ENCODE measurements at regions of chr17 and their contacts with region 1.

Region 1: GRCh38 chr17:32936894-32937500 is 9.0 kb downstream of the TMEM98 start:
- DNase-seq: no peak
- ATAC-seq: peak; percentile 97
- H3K4me3 ChIP-seq: no peak overlapping the region
- H3K27ac ChIP-seq: no peak overlapping the region
- H3K4me1 ChIP-seq: no peaks in the 10 kb centered on the region
- H3K27me3 ChIP-seq: no peaks in the 10 kb centered on the region; a peak in 1 of 4 replicates
- CTCF ChIP-seq: peak; percentile 84 to 89 (median 86)
- EP300 ChIP-seq: no peak
- POLR2A ChIP-seq: no peak
- RAD21 ChIP-seq: peak; percentile 68

Region 2: GRCh38 chr17:32777436-32777835 is 159.6 kb before region 1 on chr17:
- CTCF ChIA-PET with region 1: interaction called, 66 read pairs
- POLR2A ChIA-PET with region 1: no interaction called
- RAD21 ChIA-PET with region 1: interaction called, 37 read pairs
- SMC1A ChIA-PET with region 1: interaction called, 62 read pairs
- in situ Hi-C with region 1: loop called (anchors 5 kb)
- intact Hi-C with region 1: no loop called
- DNase-seq: no peak
- ATAC-seq: no peak
- H3K4me3 ChIP-seq: no peak overlapping the region
- H3K27ac ChIP-seq: no peak overlapping the region
- H3K4me1 ChIP-seq: no peaks in the 10 kb centered on the region
- H3K27me3 ChIP-seq: no peaks in the 10 kb centered on the region
- CTCF ChIP-seq: no peak
- EP300 ChIP-seq: no peak
- POLR2A ChIP-seq: no peak
- RAD21 ChIP-seq: no peak

Region 3: DNA sequence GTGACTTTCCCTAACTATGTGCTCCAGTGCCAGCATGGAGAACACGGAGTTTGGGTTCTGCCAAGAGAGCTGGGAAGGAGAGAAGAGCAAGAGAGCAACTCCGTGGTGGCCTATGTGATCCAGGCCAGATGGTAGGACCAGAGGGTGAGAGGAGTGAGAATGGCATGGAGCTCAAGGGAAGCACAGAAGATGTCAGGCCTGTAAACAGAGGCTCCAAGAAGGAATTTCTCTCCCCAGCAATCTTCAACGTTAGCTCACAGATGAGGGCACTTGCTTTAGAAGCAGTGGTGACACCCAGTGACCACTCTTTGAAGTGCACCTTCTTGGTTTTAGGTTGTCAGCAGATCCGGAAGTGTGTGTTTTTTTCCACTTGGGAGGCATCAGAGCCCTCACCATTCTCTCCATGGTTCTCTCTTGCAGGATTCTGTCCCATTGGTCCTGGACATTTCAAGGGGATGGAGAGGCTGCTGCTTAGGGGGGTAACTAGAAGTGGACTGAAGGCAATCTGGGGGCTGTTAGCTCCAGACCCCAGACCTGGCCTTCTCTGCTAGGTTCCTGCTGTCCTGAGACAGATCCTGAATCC is 27.1 kb before region 1 on chr17:
- CTCF ChIA-PET with region 1: interaction called, 40 read pairs
- POLR2A ChIA-PET with region 1: no interaction called
- RAD21 ChIA-PET with region 1: interaction called, 9 read pairs
- SMC1A ChIA-PET with region 1: interaction called, 9 read pairs
- in situ Hi-C with region 1: no loop called
- intact Hi-C with region 1: no loop called
- DNase-seq: peak; percentile 46
- ATAC-seq: peak; percentile 97
- H3K4me3 ChIP-seq: no peak overlapping the region
- H3K27ac ChIP-seq: no peak overlapping the region
- H3K4me1 ChIP-seq: no peaks in the 10 kb centered on the region
- H3K27me3 ChIP-seq: no peaks in the 10 kb centered on the region
- CTCF ChIP-seq: peak; percentile 85 to 94 (median 91)
- EP300 ChIP-seq: no peak
- POLR2A ChIP-seq: no peak
- RAD21 ChIP-seq: peak; percentile 87

Region 4: GRCh38 chr17:32915245-32915644 is 21.8 kb before region 1 on chr17:
- CTCF ChIA-PET with region 1: interaction called, 40 read pairs
- POLR2A ChIA-PET with region 1: interaction called, 3 read pairs
- RAD21 ChIA-PET with region 1: interaction called, 9 read pairs
- SMC1A ChIA-PET with region 1: interaction called, 9 read pairs
- in situ Hi-C with region 1: no loop called
- intact Hi-C with region 1: no loop called
- DNase-seq: no peak
- ATAC-seq: no peak
- H3K4me3 ChIP-seq: no peak overlapping the region
- H3K27ac ChIP-seq: no peak overlapping the region
- H3K4me1 ChIP-seq: no peaks in the 10 kb centered on the region
- H3K27me3 ChIP-seq: no peaks in the 10 kb centered on the region
- CTCF ChIP-seq: no peak
- EP300 ChIP-seq: no peak
- POLR2A ChIP-seq: no peak
- RAD21 ChIP-seq: no peak

Region 5: GRCh38 chr17:32997753-32998632 is 61.0 kb after region 1 on chr17:
- CTCF ChIA-PET with region 1: interaction called, 64 read pairs
- POLR2A ChIA-PET with region 1: no interaction called
- RAD21 ChIA-PET with region 1: interaction called, 12 read pairs
- SMC1A ChIA-PET with region 1: interaction called, 8 read pairs
- in situ Hi-C with region 1: no loop called
- intact Hi-C with region 1: loop called (anchors 2 kb)
- DNase-seq: no peak
- ATAC-seq: peak; percentile 92
- H3K4me3 ChIP-seq: no peak overlapping the region
- H3K27ac ChIP-seq: no peak overlapping the region
- H3K4me1 ChIP-seq: peaks cover 13% of the 10 kb centered on the region
- H3K27me3 ChIP-seq: no peaks in the 10 kb centered on the region; a peak in 1 of 4 replicates
- CTCF ChIP-seq: peak; percentile 78 to 91 (median 84)
- EP300 ChIP-seq: no peak
- POLR2A ChIP-seq: no peak
- RAD21 ChIP-seq: peak; percentile 66

Measured in GM12878 (cell line).